Motor neuron (in vitro differentiated cells): ENCODE measurements at regions of chr3 and their contacts with region 1.

Region 1: DNA sequence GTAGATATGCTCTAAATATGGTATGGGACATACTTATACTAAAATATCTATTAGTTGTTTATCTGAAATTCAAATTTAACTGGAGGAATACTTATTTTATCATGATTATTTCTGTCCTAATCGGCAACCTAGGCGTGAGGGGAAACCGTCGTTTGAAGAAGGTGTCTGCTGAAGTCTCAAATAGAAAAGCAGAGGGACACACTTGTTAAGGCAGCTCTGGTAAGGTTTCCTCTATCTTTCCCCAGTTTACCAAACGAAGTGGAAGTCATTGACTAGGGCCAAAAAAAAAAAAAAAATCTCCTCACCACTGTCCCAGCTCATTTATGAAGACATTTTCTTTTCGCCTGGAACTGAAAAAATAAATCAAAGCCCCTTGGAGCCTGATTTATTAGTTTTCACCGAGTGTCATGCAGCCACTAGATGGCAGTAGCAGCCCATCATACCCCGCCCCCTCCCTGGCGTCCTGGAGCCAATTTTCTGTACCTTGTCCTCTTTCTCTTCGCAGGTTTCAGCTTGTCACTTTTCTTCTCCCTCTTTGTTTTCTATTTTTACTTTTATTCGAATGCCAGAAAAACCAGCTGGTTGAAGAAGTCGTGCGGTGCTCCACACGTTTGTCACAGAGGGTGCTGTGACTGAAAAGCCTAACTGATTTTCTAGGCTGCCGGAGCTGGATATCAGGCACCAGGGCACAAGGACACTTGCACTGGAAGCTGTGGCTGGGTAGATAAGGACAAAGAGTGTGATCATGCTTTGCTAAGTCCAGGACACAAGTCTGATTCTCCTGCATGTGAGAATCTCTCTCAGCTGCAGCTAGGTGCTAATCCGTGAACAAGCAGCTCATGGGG is 238.7 kb downstream of the ZPLD1 start:
- ATAC-seq: peak; percentile 61 to 88 (median 78)
- H3K4me3 ChIP-seq: peak overlapping the region in 2 of 5 donors; percentile 13 to 22
- H3K27ac ChIP-seq: no peak overlapping the region
- H3K4me1 ChIP-seq: peaks cover 12 to 32% of the 10 kb centered on the region in 2 donors

Region 2: DNA sequence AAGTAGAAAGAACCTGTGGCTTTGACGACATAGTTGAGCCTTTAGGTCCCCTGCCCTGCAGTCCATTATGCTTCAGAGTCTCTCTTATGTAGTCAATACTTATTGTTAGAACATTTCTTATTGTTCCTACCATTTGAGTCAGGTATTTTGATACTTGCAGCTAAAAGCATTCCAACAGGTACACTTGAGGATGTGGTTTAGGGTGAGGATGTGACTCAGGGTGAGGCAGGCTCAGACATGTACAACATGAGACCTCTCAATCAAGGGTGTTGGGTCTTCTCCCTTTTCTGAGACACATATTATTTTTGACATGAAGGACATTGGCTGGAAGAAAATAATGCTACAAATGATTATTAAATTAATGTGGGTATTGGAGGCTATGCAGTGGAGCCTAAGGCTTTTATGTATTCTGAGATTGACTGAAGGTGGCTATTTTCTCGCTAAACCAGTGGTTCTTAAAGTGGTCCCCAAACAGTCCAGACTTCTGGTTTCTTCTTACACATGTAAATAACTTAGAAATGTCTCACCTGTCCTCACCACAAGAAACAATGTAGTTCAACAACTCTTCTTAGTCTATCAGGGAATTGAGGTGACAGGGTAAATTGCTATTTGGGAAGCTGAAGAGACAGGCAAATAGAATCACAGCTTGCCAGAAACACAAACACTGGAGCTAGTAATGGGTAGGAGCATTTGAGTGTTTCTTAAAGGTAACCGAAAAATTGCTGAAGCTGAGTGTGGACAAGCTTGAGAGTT is 374.2 kb before region 1 on chr3:
- in situ Hi-C with region 1: no loop called
- ATAC-seq: no peak
- H3K4me3 ChIP-seq: no peak overlapping the region
- H3K27ac ChIP-seq: no peak overlapping the region
- H3K4me1 ChIP-seq: peaks cover 0 to 9% of the 10 kb centered on the region in 2 donors

Region 3: GRCh38 chr3:102573483-102574028 is 99.9 kb before region 1 on chr3:
- in situ Hi-C with region 1: loop called in 1 of 9 experiments (anchors 25 kb)
- ATAC-seq: no peak
- H3K4me3 ChIP-seq: no peak overlapping the region
- H3K27ac ChIP-seq: no peak overlapping the region
- H3K4me1 ChIP-seq: peaks cover 0 to 10% of the 10 kb centered on the region in 2 donors

Region 4: DNA sequence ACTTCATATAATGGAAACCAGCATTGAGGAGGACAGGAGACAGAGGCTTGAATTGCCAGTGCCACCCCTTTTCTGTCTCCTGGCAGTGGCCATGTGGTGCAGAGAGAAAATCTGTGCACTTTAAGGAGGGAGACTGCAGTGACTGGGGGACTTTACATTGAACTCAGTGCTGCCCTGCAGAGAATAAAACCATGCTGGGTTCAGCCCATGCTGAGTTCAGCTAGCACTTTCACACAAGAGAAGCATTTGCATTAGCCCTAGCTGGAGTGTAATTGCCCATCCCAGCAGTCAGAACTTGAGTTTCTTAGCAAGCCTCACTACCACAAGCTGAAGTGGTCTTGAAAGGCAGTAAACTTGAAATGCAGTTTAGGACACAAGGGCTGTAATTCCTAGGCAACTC is 438.8 kb after region 1 on chr3:
- in situ Hi-C with region 1: no loop called
- ATAC-seq: no peak
- H3K4me3 ChIP-seq: no peak overlapping the region
- H3K27ac ChIP-seq: no peak overlapping the region
- H3K4me1 ChIP-seq: no peaks in the 10 kb centered on the region

Region 5: GRCh38 chr3:103227651-103228050 is 554.2 kb after region 1 on chr3:
- in situ Hi-C with region 1: no loop called
- ATAC-seq: no peak
- H3K4me3 ChIP-seq: no peak overlapping the region
- H3K27ac ChIP-seq: no peak overlapping the region
- H3K4me1 ChIP-seq: no peaks in the 10 kb centered on the region